CD8-positive, alpha-beta T cell (primary cell): ENCODE measurements at regions of chr4 and their contacts with region 1.

Region 1: GRCh38 chr4:163494360-163495162 is at the start of gene TMA16:
- DNase-seq: peak; percentile 55 to 90 (median 74)
- ATAC-seq: peak; percentile 80
- H3K4me3 ChIP-seq: peak within 1 kb of the TSS; percentile 97 to 98
- H3K4me3 Mint-ChIP-seq: peak within 1 kb of the TSS; percentile 95
- H3K27ac ChIP-seq: peak within 1 kb of the TSS; percentile 67 to 82
- H3K27ac Mint-ChIP-seq: peak within 1 kb of the TSS; percentile 89
- H3K4me1 ChIP-seq: peaks cover 11% of the 10 kb centered on the region
- H3K4me1 Mint-ChIP-seq: peaks cover 43% of the 10 kb centered on the region
- H3K27me3 ChIP-seq: no peaks in the 10 kb centered on the region
- H3K27me3 Mint-ChIP-seq: no peaks in the 10 kb centered on the region
- CTCF ChIP-seq: no peak
- total RNA-seq, gene TMA16: 3.6 to 4.2 TPM

Region 2: DNA sequence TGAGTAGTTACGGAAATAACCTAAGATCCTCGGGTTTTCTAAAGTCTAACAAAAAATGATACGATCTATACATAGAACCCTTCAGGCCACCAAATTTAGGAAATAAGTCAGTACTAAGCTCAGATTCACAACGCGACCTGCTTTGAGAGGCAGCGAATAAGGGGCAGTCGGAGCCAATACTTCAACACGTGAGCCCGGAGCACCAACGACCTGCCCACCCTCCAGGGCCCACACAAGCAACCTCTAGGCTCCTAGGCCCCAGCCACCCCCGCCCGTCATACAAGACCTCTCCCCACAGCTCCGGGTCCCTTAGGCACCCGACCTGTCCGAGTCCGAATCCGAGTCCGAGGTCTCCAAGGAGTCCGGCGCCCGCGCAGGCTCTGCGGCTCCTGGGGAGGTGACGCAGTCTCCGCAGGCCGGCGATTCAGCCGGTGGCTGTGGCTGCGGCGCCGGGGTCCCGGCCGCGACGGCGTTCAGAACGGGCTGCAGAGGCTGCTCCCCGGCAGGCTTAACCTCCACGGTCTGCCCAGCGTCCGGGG is 328.5 kb before region 1 on chr4:
- CTCF ChIA-PET with region 1: no interaction called
- POLR2A ChIA-PET with region 1: interaction called, 10 read pairs
- intact Hi-C with region 1: loop called (anchors 1 to 5 kb)
- DNase-seq: peak; percentile 12 to 73 (median 48)
- ATAC-seq: peak; percentile 54
- H3K4me3 ChIP-seq: peak overlapping the region; percentile 82 to 91
- H3K4me3 Mint-ChIP-seq: peak overlapping the region; percentile 93
- H3K27ac ChIP-seq: peak overlapping the region; percentile 93 to 97
- H3K27ac Mint-ChIP-seq: peak overlapping the region; percentile 98
- H3K4me1 ChIP-seq: peaks cover 26% of the 10 kb centered on the region
- H3K4me1 Mint-ChIP-seq: peaks cover 49% of the 10 kb centered on the region
- H3K27me3 ChIP-seq: no peaks in the 10 kb centered on the region
- H3K27me3 Mint-ChIP-seq: no peaks in the 10 kb centered on the region
- CTCF ChIP-seq: no peak

Region 3: GRCh38 chr4:163415668-163416067 is 78.9 kb before region 1 on chr4:
- CTCF ChIA-PET with region 1: no interaction called
- POLR2A ChIA-PET with region 1: no interaction called
- intact Hi-C with region 1: no loop called
- DNase-seq: no peak
- ATAC-seq: no peak
- H3K4me3 ChIP-seq: no peak overlapping the region
- H3K4me3 Mint-ChIP-seq: no peak overlapping the region
- H3K27ac ChIP-seq: no peak overlapping the region
- H3K27ac Mint-ChIP-seq: no peak overlapping the region
- H3K4me1 ChIP-seq: no peaks in the 10 kb centered on the region
- H3K4me1 Mint-ChIP-seq: no peaks in the 10 kb centered on the region
- H3K27me3 ChIP-seq: no peaks in the 10 kb centered on the region
- H3K27me3 Mint-ChIP-seq: peaks cover 5% of the 10 kb centered on the region
- CTCF ChIP-seq: no peak

Region 4: DNA sequence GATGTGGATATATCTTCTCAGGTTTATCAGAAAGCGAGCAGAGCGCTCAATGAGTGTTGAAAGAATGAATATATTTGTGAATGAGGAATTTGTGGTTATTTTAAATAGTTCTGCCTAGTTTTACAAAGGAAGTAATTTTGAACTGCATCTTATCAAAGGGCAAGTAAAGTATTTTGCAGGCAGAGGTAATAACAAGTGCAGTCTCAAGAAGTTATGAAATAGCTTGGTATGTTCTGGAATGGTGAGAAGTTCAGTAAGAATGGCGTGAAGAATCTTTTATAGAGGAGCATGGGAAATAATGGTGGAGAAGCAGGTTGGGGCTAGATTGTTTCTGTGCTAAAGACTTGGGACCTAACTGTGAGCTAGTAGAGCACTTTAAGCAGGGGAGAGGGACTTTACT is 10.8 kb after region 1 on chr4:
- CTCF ChIA-PET with region 1: no interaction called
- POLR2A ChIA-PET with region 1: no interaction called
- intact Hi-C with region 1: loop called in 1 of 2 experiments (anchors 2 kb)
- DNase-seq: no peak
- ATAC-seq: no peak
- H3K4me3 ChIP-seq: no peak overlapping the region
- H3K4me3 Mint-ChIP-seq: no peak overlapping the region
- H3K27ac ChIP-seq: no peak overlapping the region
- H3K27ac Mint-ChIP-seq: peak overlapping the region; percentile 15
- H3K4me1 ChIP-seq: no peaks in the 10 kb centered on the region
- H3K4me1 Mint-ChIP-seq: peaks cover 35% of the 10 kb centered on the region
- H3K27me3 ChIP-seq: no peaks in the 10 kb centered on the region
- H3K27me3 Mint-ChIP-seq: no peaks in the 10 kb centered on the region
- CTCF ChIP-seq: no peak

Region 5: GRCh38 chr4:165327211-165328100 is 1832.9 kb after region 1 on chr4 and contains the start of gene MSMO1:
- CTCF ChIA-PET with region 1: no interaction called
- POLR2A ChIA-PET with region 1: no interaction called
- intact Hi-C with region 1: loop called in 1 of 2 experiments (anchors 10 kb)
- DNase-seq: peak; percentile 95 to 99 (median 98)
- ATAC-seq: peak; percentile 95
- H3K4me3 ChIP-seq: peak within 1 kb of the TSS; percentile 64 to 92
- H3K4me3 Mint-ChIP-seq: no peak within 1 kb of the TSS
- H3K27ac ChIP-seq: peak within 1 kb of the TSS; percentile 84 to 87
- H3K27ac Mint-ChIP-seq: no peak within 1 kb of the TSS
- H3K4me1 ChIP-seq: peaks cover 21% of the 10 kb centered on the region
- H3K4me1 Mint-ChIP-seq: peaks cover 37% of the 10 kb centered on the region
- H3K27me3 ChIP-seq: no peaks in the 10 kb centered on the region
- H3K27me3 Mint-ChIP-seq: no peaks in the 10 kb centered on the region
- CTCF ChIP-seq: no peak
- total RNA-seq, gene MSMO1: 18.6 to 19.2 TPM